Left cardiac atrium (tissue), 4 donors: ENCODE measurements at regions of chr5 and their contacts with region 1.

Region 1: DNA sequence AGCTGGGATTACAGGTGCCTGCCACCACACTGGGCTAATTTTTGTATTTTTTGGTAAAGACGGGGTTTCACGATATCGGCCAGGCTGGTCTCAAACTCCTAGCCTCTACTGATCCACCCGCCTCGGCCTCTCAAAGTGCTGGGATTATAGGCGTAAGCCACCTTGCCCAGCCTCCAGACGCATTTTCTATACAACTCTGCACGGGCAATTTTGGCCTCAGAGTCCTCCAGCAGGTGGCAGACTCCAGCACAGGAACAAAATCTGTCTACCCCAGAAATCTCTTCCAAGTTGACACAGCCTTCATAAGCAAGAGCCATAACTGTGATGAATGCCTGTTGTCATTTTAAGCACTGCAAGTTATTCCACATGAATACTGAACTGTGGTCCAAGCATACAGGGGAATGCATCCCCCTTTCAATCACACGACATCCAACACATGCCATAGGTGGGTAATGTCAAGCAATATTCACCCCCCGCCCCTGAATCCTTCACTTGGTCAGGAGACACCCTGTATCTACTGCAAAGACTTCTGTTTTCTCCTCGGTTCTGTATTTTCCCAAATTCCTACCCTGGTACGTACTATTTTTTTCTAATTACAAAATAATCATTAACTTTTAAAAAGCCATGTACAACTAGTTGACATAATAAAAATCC is 50.8 kb downstream of the ALDH7A1 start:
- DNase-seq: no peak
- ATAC-seq: peak in 1 of 2 donors; percentile 37

Region 2: DNA sequence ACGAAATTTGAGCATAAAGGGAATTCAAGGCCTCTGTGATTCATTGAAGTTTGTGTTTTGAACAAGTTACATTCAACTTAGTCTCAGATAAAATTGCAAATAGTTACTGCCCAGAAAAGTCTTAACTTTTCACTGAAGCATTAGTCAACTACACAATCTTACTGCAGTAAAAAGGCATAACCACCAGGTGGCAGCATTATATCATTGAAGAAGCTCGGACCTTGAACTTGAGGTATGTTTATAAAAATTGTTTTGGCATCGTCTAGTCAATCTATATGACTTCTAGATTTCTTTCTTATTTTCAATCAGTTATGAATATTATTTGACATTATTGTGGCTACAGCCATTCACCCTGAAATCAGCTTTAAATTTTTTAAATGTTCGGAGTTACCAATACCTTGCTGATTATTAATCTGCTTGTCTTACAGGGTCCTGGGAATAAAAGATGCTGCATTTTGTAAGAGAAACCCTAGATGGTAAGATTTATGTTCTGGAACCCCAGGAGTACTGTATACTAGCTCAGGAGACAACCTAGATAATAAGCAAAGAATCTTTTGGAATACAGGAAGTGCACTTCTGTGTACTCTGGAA is 204.9 kb before region 1 on chr5:
- intact Hi-C with region 1: loop called in 1 of 2 experiments (anchors 5 kb)
- DNase-seq: no peak
- ATAC-seq: peak; percentile 44 to 45

Region 3: GRCh38 chr5:126354012-126354857 is 190.0 kb before region 1 on chr5:
- intact Hi-C with region 1: loop called (anchors 1 to 5 kb)
- DNase-seq: no peak
- ATAC-seq: peak; percentile 80 to 88

Region 4: DNA sequence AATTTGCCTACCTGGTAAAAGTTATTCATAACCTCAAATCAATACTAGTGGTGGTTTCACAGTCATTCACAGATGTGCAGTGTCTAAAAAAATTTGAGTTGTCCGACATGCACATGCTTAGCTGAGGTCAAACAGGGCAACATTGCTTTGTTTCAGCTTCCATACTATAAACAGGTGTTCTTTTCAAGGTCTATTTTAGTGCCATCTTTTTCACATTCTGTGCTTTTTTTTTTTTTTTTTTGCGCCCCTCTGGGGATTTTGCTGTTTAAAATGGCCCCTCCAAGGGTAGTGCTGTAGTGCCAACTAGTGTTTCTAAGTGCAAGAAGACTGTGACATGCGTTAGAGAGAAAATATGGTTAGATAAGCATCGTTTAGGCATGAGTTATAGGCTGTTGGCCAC is 71.1 kb after region 1 on chr5:
- intact Hi-C with region 1: no loop called
- DNase-seq: no peak
- ATAC-seq: no peak

Region 5: DNA sequence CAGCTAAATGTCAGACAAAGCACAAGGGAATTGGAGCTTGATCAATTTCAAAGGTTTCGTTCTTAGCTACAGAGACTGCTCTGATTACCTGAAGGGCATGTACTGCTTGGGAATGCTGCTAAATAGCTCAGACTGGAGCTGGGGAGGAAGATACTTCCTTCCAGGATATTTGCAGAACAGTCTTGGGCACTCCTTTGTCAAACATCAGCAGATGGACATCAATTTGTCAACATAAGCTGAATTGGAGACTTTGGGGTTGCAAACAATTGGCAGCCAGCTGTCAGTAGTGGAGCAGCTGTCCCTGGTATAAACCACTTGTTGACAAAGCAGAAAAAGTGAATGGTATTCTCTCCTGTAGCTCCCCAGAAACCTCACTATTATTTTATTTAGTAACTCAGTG is 1341.0 kb after region 1 on chr5:
- intact Hi-C with region 1: no loop called
- DNase-seq: no peak
- ATAC-seq: no peak